Heart left ventricle (tissue), 16 donors: ENCODE measurements at regions of chrX and their contacts with region 1.

Region 1: GRCh38 chrX:66892004-66892403 is 253.1 kb upstream of the EDA2R start:
- DNase-seq: no peak
- ATAC-seq: no peak
- H3K4me3 ChIP-seq: no peak overlapping the region
- H3K27ac ChIP-seq: no peak overlapping the region
- H3K4me1 ChIP-seq: no peaks in the 10 kb centered on the region
- H3K27me3 ChIP-seq: peaks cover 0 to 19% (median 0%) of the 10 kb centered on the region in 9 donors
- CTCF ChIP-seq: no peak
- POLR2A ChIP-seq: no peak

Region 2: GRCh38 chrX:66760657-66761056 is 131.3 kb before region 1 on chrX:
- intact Hi-C with region 1: no loop called
- DNase-seq: no peak
- ATAC-seq: no peak
- H3K4me3 ChIP-seq: no peak overlapping the region
- H3K27ac ChIP-seq: no peak overlapping the region
- H3K4me1 ChIP-seq: no peaks in the 10 kb centered on the region
- H3K27me3 ChIP-seq: no peaks in the 10 kb centered on the region
- CTCF ChIP-seq: peak in 2 of 12 donors; percentile 8 to 11
- POLR2A ChIP-seq: no peak

Region 3: GRCh38 chrX:66833426-66833825 is 58.6 kb before region 1 on chrX:
- intact Hi-C with region 1: loop called in 1 of 10 experiments (anchors 10 kb)
- DNase-seq: no peak
- ATAC-seq: no peak
- H3K4me3 ChIP-seq: no peak overlapping the region
- H3K27ac ChIP-seq: no peak overlapping the region
- H3K4me1 ChIP-seq: no peaks in the 10 kb centered on the region
- H3K27me3 ChIP-seq: no peaks in the 10 kb centered on the region
- CTCF ChIP-seq: no peak
- POLR2A ChIP-seq: no peak